Right ventricle myocardium inferior (tissue), 1 donor: ENCODE measurements at regions of chr17 and their contacts with region 1.

Region 1: GRCh38 chr17:68457539-68458259 is 403 bp upstream of the WIPI1 start:
- DNase-seq: peak; percentile 99
- ATAC-seq: peak; percentile 89

Region 2: GRCh38 chr17:68101075-68101992 is 356.4 kb before region 1 on chr17:
- intact Hi-C with region 1: loop called (anchors 10 kb)
- DNase-seq: peak; percentile 96
- ATAC-seq: peak; percentile 99

Region 3: DNA sequence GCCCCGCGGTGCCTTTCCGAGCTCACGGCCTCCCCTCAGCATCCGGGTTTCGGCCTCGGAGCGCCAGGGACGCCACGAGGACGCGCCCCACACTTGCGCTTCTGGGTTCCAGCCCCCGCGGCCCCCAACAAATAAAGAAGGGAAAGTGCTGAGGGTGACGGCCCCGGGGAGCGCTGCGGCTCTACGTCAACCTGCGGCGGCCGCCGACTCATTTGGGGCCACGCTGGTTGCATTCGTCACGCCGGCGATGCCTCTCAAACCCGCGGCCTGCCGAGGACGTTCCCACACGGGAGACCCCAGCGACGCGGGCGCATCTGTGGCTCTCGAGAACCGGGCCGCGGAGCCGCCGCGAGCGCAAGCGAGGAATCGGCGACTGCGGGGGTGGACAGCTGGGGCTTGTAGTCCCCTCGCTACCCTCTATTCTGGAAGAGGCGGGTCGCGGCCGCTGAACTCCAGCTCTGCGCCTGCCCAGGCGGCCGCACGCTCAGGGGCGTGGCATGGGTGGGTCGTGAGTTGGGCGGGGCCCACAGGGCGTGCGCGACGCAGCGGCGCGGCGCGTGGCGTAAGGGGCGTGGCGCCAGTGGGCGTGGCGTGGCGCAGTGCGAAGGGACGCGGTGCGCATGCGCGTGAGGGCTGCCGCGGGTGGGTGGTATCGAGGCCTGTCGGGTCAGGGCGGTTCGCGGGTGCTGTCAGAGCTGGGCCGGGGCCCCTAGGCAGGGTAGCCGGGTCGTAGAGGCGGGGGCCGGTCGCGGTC is 210.1 kb before region 1 on chr17 and contains the start of gene AMZ2:
- intact Hi-C with region 1: loop called (anchors 5 kb)
- DNase-seq: peak; percentile 98
- ATAC-seq: peak; percentile 99
- total RNA-seq, gene AMZ2: 89.8 TPM

Region 4: GRCh38 chr17:68377862-68378770 is 79.6 kb before region 1 on chr17:
- intact Hi-C with region 1: loop called (anchors 5 kb)
- DNase-seq: peak; percentile 98
- ATAC-seq: peak; percentile 92

Region 5: GRCh38 chr17:68424942-68425386 is 32.7 kb before region 1 on chr17:
- intact Hi-C with region 1: loop called (anchors 5 kb)
- DNase-seq: no peak
- ATAC-seq: no peak

Region 6: GRCh38 chr17:68437979-68438822 is 19.5 kb before region 1 on chr17:
- intact Hi-C with region 1: loop called (anchors 2 kb)
- DNase-seq: no peak
- ATAC-seq: peak; percentile 55